Cardiac septum (tissue), 1 donor: ENCODE measurements at regions of chr3 and their contacts with region 1.

Region 1: DNA sequence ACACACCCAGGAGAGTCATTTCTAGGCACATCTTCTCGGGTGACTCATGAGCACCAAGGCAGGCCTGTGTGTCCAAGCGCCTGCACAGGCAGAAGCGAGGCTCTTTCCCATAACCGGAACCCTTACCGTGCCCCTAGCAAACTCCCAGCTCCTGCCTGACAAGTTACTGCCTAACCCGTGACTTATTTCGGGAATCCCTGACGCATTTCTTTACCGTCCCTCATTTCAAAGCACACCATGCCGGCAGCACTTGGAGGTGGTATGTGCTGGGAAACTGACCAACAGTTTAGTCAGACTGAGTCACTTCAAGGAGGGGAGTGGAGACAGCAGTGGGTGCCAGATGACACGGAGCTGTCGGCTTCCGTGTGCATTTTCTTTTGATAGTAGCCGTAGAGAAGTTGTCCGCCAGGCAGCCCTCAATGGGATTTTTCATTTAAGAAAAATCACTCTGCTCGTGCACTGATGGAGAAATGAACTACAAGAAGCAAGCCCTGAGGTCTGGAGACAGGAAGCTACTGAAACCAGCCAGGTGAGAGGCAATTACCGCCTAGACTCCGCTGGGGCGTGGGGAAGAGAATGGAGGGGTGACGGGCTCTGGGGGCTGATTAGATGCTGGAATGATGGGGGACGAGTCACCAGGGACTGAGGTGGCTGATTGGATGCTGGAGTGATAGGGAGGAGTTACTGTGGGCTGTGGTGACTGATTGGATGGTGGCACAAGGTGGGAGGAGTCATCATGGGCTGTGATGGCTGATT is 17.2 kb upstream of the HRH1 start:
- DNase-seq: no peak

Region 2: DNA sequence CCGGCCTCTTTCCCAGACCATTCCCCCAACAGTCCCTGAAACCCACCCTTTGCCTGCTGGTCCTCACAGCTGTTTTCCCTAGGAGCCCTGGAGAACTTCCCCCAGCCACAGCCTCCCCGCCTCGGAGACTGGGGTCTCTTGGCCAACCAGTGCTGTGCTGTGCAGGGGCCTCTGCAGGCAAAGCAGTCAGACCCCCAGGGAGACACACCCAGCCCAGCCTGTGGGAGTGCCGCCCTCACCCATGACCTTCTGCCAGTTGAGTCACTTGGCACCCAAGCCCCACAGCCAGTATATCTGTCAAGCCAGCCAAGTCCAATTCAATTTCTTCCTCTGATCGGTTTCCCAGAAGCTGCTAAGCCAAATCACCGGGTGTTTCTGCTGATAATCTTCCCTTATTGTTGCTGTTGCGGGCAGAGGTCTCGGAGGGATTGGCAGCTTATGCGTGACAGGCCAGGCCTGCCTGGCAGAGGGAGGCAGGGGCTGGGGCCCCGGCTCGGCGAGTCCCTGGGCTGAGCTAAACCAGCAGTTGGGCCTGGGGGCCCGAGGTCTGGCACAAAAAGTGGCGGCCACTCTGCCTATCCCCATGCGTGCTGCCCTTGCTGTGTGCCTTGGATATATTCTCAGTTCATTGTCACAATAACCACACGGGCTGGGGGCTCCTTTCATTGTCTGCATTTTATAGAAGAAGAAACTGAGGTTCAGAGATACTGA is 210.1 kb before region 1 on chr3:
- intact Hi-C with region 1: no loop called
- DNase-seq: peak; percentile 74

Region 3: DNA sequence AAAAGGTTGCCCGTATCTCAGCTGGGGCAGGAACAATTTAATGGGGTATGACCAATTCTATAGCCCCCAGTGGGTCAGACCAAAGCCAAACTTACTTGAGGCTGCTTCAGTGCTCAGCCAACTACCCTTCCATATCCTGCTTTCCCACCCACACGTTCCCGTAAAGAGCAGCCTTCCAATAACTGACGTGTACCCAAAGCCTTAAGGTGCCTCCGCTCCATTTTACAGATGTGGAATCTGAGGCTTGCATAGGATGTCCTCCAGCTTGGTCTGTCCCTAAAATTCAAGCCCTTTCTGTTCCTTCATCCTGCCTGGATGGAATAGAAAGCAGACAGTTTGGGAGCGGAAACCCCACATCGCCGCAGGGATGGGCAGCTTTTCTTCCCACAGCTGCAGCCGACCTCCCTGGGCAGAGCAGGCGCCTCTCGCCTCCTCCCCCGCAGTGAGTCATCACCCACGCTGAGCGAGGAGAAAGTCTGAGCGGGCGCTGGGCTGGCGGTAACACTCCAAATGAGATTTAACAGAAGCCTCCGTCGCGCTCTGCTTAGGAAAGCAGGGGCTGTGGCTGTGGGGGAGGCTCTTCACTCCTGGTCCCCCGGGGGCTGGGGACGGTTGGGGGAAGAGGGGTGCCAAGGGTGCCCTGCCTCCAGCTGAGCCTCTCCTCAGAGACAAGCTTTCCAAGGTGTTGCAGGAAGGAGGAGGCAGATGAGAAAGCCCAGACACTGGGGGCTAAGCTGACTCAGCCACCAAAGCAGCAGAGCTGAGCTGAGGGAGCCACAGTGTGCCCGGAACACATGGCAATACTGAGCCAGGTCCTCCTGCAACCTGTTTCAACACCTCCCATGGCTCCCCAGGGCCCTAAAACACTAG is 40.5 kb before region 1 on chr3:
- intact Hi-C with region 1: loop called (anchors 5 kb)
- DNase-seq: peak; percentile 88